CD4-positive, alpha-beta T cell (primary cell): ENCODE measurements at regions of chr6 and their contacts with region 1.

Region 1: GRCh38 chr6:24933868-24934401 is 1.8 kb downstream of the RIPOR2 start:
- DNase-seq: peak in 10 of 14 experiments; percentile 30 to 82 (median 50)
- ATAC-seq: peak; percentile 21
- H3K4me3 ChIP-seq: peak overlapping the region; percentile 89
- H3K4me3 Mint-ChIP-seq: peak overlapping the region; percentile 97
- H3K27ac ChIP-seq: peak overlapping the region; percentile 71 to 89
- H3K27ac Mint-ChIP-seq: peak overlapping the region; percentile 97
- H3K4me1 ChIP-seq: peaks cover 38% of the 10 kb centered on the region
- H3K4me1 Mint-ChIP-seq: peaks cover 62% of the 10 kb centered on the region
- H3K27me3 ChIP-seq: no peaks in the 10 kb centered on the region
- H3K27me3 Mint-ChIP-seq: no peaks in the 10 kb centered on the region
- CTCF ChIP-seq: peak; percentile 97

Region 2: GRCh38 chr6:24855395-24856245 is 78.3 kb before region 1 on chr6:
- CTCF ChIA-PET with region 1: interaction called, 47 read pairs
- POLR2A ChIA-PET with region 1: interaction called, 74 read pairs
- intact Hi-C with region 1: loop called (anchors 2 kb)
- DNase-seq: peak; percentile 49 to 90 (median 61)
- ATAC-seq: peak; percentile 66
- H3K4me3 ChIP-seq: no peak overlapping the region
- H3K4me3 Mint-ChIP-seq: peak overlapping the region; percentile 17
- H3K27ac ChIP-seq: peak overlapping the region; percentile 35 to 61
- H3K27ac Mint-ChIP-seq: peak overlapping the region; percentile 93
- H3K4me1 ChIP-seq: peaks cover 51% of the 10 kb centered on the region
- H3K4me1 Mint-ChIP-seq: peaks cover 67% of the 10 kb centered on the region
- H3K27me3 ChIP-seq: no peaks in the 10 kb centered on the region
- H3K27me3 Mint-ChIP-seq: no peaks in the 10 kb centered on the region
- CTCF ChIP-seq: peak; percentile 79

Region 3: DNA sequence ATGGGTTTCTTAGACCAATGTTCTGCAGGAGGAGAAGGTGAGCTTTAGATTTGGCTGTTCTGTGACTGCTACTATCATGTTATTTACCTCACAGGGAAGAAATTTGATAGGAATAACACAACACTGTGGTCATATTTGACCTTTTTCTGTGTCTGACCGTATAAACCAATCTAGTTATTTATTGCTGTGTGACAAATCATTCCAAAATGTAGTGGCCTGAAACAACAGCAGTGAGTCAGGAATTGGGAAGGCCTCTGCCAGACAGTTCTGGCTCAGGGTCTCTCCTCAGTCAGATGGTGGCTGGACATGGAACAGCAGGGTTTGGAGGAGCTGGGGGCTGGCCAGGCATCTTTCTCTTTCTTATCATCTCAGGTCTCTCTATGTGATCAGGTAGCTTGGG is 31.2 kb before region 1 on chr6:
- CTCF ChIA-PET with region 1: interaction called, 22 read pairs
- POLR2A ChIA-PET with region 1: interaction called, 172 read pairs
- intact Hi-C with region 1: loop called in 1 of 2 experiments (anchors 5 kb)
- DNase-seq: no peak
- ATAC-seq: no peak
- H3K4me3 ChIP-seq: no peak overlapping the region
- H3K4me3 Mint-ChIP-seq: peak overlapping the region; percentile 36
- H3K27ac ChIP-seq: peak overlapping the region; percentile 31 to 39
- H3K27ac Mint-ChIP-seq: peak overlapping the region; percentile 97
- H3K4me1 ChIP-seq: peaks cover 70% of the 10 kb centered on the region
- H3K4me1 Mint-ChIP-seq: peaks cover 99% of the 10 kb centered on the region
- H3K27me3 ChIP-seq: no peaks in the 10 kb centered on the region
- H3K27me3 Mint-ChIP-seq: no peaks in the 10 kb centered on the region
- CTCF ChIP-seq: no peak

Region 4: GRCh38 chr6:24919004-24919892 is 14.7 kb before region 1 on chr6:
- CTCF ChIA-PET with region 1: interaction called, 65 read pairs
- POLR2A ChIA-PET with region 1: interaction called, 172 read pairs
- intact Hi-C with region 1: loop called in 1 of 2 experiments (anchors 2 kb)
- DNase-seq: peak in 1 of 14 experiments; percentile 37
- ATAC-seq: peak; percentile 33
- H3K4me3 ChIP-seq: peak overlapping the region; percentile 17
- H3K4me3 Mint-ChIP-seq: peak overlapping the region; percentile 81
- H3K27ac ChIP-seq: peak overlapping the region; percentile 38 to 73
- H3K27ac Mint-ChIP-seq: peak overlapping the region; percentile 97
- H3K4me1 ChIP-seq: peaks cover 90% of the 10 kb centered on the region
- H3K4me1 Mint-ChIP-seq: peaks cover 93% of the 10 kb centered on the region
- H3K27me3 ChIP-seq: no peaks in the 10 kb centered on the region
- H3K27me3 Mint-ChIP-seq: no peaks in the 10 kb centered on the region
- CTCF ChIP-seq: no peak

Region 5: DNA sequence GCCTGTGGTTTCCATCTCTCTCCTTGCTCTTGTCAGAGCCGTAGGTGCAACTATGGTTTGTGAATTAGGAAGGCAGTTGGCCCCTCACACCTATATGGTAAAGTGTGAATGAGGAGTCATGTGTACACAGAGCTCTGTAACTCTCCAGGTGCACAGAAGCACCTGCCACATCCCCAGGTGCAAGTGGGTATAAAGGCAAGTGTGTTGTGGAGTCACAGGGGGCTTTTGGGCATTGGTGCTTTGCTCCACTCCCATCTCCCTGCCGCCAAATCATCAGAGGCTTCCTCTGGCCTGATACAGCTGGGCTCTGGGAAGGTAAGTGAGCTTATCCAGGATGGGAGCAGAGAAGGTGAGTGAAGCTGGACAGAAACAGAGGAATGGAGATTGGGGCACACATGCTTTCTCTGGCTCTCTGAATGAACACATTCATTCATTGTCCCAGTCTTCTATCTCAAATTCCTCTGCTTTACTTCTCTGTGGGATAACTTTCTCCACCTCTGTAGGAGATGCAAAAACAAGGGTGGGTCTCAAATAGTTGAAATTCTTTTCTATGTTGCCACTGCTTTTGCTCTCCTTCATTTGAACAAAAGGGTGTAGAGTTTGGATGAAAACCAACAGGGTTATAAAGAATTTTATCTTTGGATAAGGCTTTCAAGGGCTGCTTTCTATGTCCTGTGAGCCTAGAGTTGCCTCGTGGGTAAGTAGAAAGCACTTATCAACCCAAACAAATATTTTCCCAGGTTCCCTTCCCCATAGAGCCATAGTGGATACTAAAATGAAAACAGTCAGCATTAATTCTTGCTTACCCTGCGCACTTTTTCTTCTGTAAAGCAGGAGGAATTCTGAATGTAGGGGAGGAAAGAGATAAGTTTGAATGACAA is 46.8 kb after region 1 on chr6:
- CTCF ChIA-PET with region 1: interaction called, 13 read pairs
- POLR2A ChIA-PET with region 1: interaction called, 30 read pairs
- intact Hi-C with region 1: no loop called
- DNase-seq: peak in 1 of 14 experiments; percentile 25
- ATAC-seq: peak; percentile 43
- H3K4me3 ChIP-seq: no peak overlapping the region
- H3K4me3 Mint-ChIP-seq: peak overlapping the region; percentile 11
- H3K27ac ChIP-seq: no peak overlapping the region
- H3K27ac Mint-ChIP-seq: peak overlapping the region; percentile 3
- H3K4me1 ChIP-seq: peaks cover 31% of the 10 kb centered on the region
- H3K4me1 Mint-ChIP-seq: peaks cover 78% of the 10 kb centered on the region
- H3K27me3 ChIP-seq: no peaks in the 10 kb centered on the region
- H3K27me3 Mint-ChIP-seq: no peaks in the 10 kb centered on the region
- CTCF ChIP-seq: no peak

Region 6: DNA sequence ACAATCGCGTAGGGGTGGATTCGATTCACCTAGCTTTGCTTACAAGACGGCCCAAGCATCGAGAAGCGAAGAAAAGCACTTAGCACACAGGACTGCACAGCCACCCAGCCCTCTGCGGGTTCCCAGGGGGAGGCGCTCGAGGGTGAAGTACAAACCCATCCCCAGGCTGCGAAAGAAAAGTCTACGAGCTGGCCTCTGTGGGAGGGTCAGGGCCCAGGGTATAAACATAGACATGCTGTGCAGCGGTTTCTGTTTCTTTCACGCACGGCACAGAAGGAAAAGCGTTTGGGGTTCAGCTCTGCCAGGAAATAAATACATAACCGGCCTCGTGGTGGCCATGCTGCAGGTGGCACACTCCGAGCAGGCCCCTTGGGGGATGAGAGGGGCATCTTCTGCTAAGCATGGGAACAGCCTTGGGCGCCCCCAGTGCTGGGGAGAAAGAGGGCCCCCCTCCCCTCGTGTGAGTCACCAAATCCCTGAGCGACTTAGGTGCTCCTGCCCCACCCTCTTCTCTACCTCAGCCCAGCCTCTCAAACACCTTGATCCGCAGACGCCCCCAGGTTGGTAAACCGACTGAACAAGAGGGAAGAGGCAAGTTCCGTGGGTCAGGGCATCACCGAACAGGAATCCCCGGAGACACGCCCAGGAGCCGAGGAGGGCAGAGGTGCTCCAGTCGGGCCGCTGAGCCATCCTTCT is 93.4 kb after region 1 on chr6:
- CTCF ChIA-PET with region 1: interaction called, 19 read pairs
- POLR2A ChIA-PET with region 1: interaction called, 7 read pairs
- intact Hi-C with region 1: no loop called
- DNase-seq: peak; percentile 64 to 93 (median 76)
- ATAC-seq: peak; percentile 93
- H3K4me3 ChIP-seq: peak overlapping the region; percentile 47
- H3K4me3 Mint-ChIP-seq: peak overlapping the region; percentile 70
- H3K27ac ChIP-seq: peak overlapping the region; percentile 60 to 62
- H3K27ac Mint-ChIP-seq: peak overlapping the region; percentile 91
- H3K4me1 ChIP-seq: peaks cover 37% of the 10 kb centered on the region
- H3K4me1 Mint-ChIP-seq: peaks cover 59% of the 10 kb centered on the region
- H3K27me3 ChIP-seq: no peaks in the 10 kb centered on the region
- H3K27me3 Mint-ChIP-seq: no peaks in the 10 kb centered on the region
- CTCF ChIP-seq: peak; percentile 41